PC-9 (cell line): ENCODE measurements at regions of chr19 and their contacts with region 1.

Region 1: GRCh38 chr19:13794757-13795589 is at the start of gene ZSWIM4:
- DNase-seq: peak; percentile 98 to 99
- H3K4me3 ChIP-seq: peak within 1 kb of the TSS; percentile 99
- H3K27ac ChIP-seq: peak within 1 kb of the TSS; percentile 94
- H3K4me1 ChIP-seq: peaks cover 33% of the 10 kb centered on the region
- H3K27me3 ChIP-seq: no peaks in the 10 kb centered on the region
- CTCF ChIP-seq: 0 out of 2 replicates have a peak, but pooled peaks have one; percentile 6
- total RNA-seq, gene ZSWIM4: 15.2 and 15.8 TPM in 2 replicates

Region 2: DNA sequence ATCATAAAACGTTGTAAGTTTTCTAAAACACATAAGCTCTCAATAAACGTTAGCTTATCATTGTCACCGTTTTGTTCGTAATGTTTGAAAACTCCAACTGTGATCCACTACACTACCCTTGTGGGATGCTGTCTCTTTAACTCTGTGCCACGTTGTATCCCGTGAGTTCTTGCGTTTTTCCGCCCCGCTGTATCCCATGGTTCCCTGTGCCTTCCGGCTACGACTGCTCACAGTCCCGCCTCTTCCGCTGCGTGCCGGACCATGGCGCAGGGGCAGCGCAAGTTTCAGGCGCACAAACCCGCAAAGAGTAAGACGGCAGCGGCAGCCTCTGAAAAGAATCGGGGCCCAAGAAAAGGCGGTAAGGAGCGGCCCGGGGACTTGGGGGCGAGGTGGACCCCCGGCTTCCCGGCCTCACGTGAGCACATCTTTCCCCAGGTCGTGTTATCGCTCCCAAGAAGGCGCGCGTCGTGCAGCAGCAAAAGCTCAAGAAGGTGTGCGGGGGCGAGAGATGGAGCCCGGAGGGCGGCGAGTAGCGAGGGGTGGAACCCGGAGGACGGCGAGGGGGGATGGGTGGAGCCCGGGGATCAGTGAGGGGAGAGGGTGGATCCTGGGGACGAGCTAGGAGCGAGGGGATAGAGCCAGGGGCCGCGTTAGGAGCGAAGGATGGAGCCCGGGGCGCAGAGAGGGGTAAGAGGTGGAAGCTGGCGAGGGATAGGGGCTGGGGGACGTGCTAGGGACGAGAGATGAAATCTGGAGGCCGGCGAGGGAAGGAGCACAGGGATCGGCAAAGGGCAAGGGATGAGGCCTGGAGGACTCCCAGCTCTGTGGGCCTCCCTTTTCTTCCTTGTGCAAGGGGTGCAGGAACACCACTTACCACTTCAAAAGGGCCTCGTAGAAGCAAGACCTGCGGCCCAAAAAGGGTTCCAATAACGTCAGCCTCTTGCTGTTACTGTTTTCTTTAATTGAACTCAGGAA is 20.5 kb before region 1 on chr19 and contains the start of gene C19orf53:
- CTCF ChIA-PET with region 1: no interaction called
- POLR2A ChIA-PET with region 1: interaction called, 11 read pairs
- intact Hi-C with region 1: no loop called
- DNase-seq: peak; percentile 82 to 83
- H3K4me3 ChIP-seq: peak within 1 kb of the TSS; percentile 88
- H3K27ac ChIP-seq: peak within 1 kb of the TSS; percentile 44
- H3K4me1 ChIP-seq: peaks cover 6% of the 10 kb centered on the region
- H3K27me3 ChIP-seq: no peaks in the 10 kb centered on the region
- CTCF ChIP-seq: no peak
- total RNA-seq, gene C19orf53: 99.4 and 121 TPM in 2 replicates

Region 3: GRCh38 chr19:13833330-13834243 is 38.6 kb after region 1 on chr19:
- CTCF ChIA-PET with region 1: interaction called, 3 read pairs
- POLR2A ChIA-PET with region 1: interaction called, 18 read pairs
- intact Hi-C with region 1: loop called (anchors 2 kb)
- DNase-seq: peak; percentile 87 to 95
- H3K4me3 ChIP-seq: peak overlapping the region; percentile 22; the same call in 1 of the 2 replicates
- H3K27ac ChIP-seq: peak overlapping the region; percentile 59
- H3K4me1 ChIP-seq: peaks cover 52% of the 10 kb centered on the region
- H3K27me3 ChIP-seq: no peaks in the 10 kb centered on the region
- CTCF ChIP-seq: no peak; the same call in none of the 2 replicates

Region 4: GRCh38 chr19:13846557-13847406 is 51.8 kb after region 1 on chr19:
- CTCF ChIA-PET with region 1: no interaction called
- POLR2A ChIA-PET with region 1: interaction called, 14 read pairs
- intact Hi-C with region 1: no loop called
- DNase-seq: peak; percentile 93 to 97
- H3K4me3 ChIP-seq: peak overlapping the region; percentile 77
- H3K27ac ChIP-seq: peak overlapping the region; percentile 97
- H3K4me1 ChIP-seq: peaks cover 70% of the 10 kb centered on the region
- H3K27me3 ChIP-seq: no peaks in the 10 kb centered on the region
- CTCF ChIP-seq: no peak